PC-3 (cell line): ENCODE measurements at regions of chr1 and their contacts with region 1.

Region 1: GRCh38 chr1:188937965-188938551 is 1539.6 kb downstream of the BRINP3 start:
- DNase-seq: peak; percentile 16
- ATAC-seq: peak; percentile 38
- H3K4me3 ChIP-seq: no peak overlapping the region
- H3K27ac ChIP-seq: no peak overlapping the region
- H3K4me1 ChIP-seq: no peaks in the 10 kb centered on the region
- H3K27me3 ChIP-seq: no peaks in the 10 kb centered on the region
- CTCF ChIP-seq: peak; percentile 65

Region 2: GRCh38 chr1:188463913-188464312 is 474.1 kb before region 1 on chr1:
- CTCF ChIA-PET with region 1: no interaction called
- POLR2A ChIA-PET with region 1: no interaction called
- intact Hi-C with region 1: loop called (anchors 10 kb)
- DNase-seq: peak; percentile 37
- ATAC-seq: peak; percentile 27; the same call in 1 of the 2 replicates
- H3K4me3 ChIP-seq: no peak overlapping the region
- H3K27ac ChIP-seq: no peak overlapping the region
- H3K4me1 ChIP-seq: no peaks in the 10 kb centered on the region
- H3K27me3 ChIP-seq: no peaks in the 10 kb centered on the region
- CTCF ChIP-seq: peak; percentile 33; the same call in 1 of the 2 replicates

Region 3: DNA sequence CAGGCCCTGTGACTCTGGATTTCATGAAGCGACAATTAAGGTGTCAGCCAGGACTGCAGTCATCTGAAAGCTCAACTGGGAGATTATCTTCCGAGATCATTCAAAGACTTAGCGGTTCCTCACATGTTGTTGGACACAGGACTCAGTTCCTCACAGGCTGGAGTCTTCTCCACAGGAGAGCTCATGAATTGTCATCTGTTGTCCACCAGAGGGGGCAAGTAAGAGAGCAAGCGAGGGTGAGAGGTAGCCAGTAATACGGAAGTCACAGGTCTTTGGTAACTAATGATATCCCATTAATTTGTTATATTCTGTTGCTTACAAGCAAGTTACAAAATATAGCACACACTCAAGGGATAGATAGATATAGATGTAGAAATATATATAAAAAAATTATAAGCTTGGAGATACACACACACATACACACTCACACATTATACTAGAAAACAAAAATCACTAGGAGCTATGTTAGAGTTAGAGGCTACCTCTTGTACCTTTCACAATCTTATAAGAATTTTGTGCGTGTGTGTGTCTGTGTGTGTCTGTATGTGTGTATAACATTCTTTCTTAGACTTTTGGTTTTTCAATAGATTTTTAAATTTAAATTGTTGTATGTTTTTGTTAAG is 155.7 kb before region 1 on chr1:
- CTCF ChIA-PET with region 1: interaction called, 5 read pairs
- POLR2A ChIA-PET with region 1: no interaction called
- intact Hi-C with region 1: loop called (anchors 1 kb)
- DNase-seq: peak; percentile 55
- ATAC-seq: peak; percentile 88
- H3K4me3 ChIP-seq: no peak overlapping the region
- H3K27ac ChIP-seq: no peak overlapping the region
- H3K4me1 ChIP-seq: peaks cover 7% of the 10 kb centered on the region; the same call in 1 of the 2 replicates
- H3K27me3 ChIP-seq: no peaks in the 10 kb centered on the region
- CTCF ChIP-seq: peak; percentile 69

Region 4: DNA sequence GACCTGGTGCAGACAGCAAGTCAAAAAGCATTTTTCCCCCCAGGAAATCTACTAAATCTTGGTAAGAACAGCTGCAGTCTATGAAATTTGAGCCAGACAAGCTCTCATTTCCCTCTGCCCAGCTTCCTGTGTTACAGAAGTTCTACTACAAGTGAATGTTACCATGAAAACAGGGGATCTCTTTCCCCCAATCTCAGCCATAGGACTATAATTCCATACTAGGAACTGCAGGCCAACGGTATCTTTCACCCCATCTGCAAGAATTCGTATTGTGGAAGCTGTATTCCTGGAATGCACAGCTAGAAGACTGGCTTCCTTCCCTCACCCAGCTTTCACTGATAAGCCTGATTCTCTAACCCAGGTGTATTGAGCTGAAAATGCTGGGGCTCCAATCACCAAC is 115.8 kb before region 1 on chr1:
- CTCF ChIA-PET with region 1: interaction called, 13 read pairs
- POLR2A ChIA-PET with region 1: no interaction called
- intact Hi-C with region 1: no loop called
- DNase-seq: peak; percentile 11
- ATAC-seq: peak; percentile 46
- H3K4me3 ChIP-seq: no peak overlapping the region
- H3K27ac ChIP-seq: no peak overlapping the region
- H3K4me1 ChIP-seq: peaks cover 9% of the 10 kb centered on the region
- H3K27me3 ChIP-seq: no peaks in the 10 kb centered on the region
- CTCF ChIP-seq: no peak